ENCODE measurements at regions of chr10 and their contacts with region 1.

Region 1: GRCh38 chr10:95246579-95247051 is 44.2 kb downstream of the PDLIM1 start:
- DNase-seq: peak; percentile 89
- H3K4me3 ChIP-seq: no peak overlapping the region
- H3K27ac ChIP-seq: no peak overlapping the region
- H3K4me1 ChIP-seq: peaks cover 51% of the 10 kb centered on the region
- CTCF ChIP-seq: peak; percentile 96

Region 2: GRCh38 chr10:95133016-95133752 is 113.4 kb before region 1 on chr10:
- CTCF ChIA-PET with region 1: interaction called, 6 read pairs
- POLR2A ChIA-PET with region 1: interaction called, 3 read pairs
- intact Hi-C with region 1: loop called (anchors 1 kb)
- DNase-seq: peak; percentile 83
- H3K4me3 ChIP-seq: no peak overlapping the region
- H3K27ac ChIP-seq: no peak overlapping the region
- H3K4me1 ChIP-seq: no peaks in the 10 kb centered on the region
- CTCF ChIP-seq: peak; percentile 93

Region 3: DNA sequence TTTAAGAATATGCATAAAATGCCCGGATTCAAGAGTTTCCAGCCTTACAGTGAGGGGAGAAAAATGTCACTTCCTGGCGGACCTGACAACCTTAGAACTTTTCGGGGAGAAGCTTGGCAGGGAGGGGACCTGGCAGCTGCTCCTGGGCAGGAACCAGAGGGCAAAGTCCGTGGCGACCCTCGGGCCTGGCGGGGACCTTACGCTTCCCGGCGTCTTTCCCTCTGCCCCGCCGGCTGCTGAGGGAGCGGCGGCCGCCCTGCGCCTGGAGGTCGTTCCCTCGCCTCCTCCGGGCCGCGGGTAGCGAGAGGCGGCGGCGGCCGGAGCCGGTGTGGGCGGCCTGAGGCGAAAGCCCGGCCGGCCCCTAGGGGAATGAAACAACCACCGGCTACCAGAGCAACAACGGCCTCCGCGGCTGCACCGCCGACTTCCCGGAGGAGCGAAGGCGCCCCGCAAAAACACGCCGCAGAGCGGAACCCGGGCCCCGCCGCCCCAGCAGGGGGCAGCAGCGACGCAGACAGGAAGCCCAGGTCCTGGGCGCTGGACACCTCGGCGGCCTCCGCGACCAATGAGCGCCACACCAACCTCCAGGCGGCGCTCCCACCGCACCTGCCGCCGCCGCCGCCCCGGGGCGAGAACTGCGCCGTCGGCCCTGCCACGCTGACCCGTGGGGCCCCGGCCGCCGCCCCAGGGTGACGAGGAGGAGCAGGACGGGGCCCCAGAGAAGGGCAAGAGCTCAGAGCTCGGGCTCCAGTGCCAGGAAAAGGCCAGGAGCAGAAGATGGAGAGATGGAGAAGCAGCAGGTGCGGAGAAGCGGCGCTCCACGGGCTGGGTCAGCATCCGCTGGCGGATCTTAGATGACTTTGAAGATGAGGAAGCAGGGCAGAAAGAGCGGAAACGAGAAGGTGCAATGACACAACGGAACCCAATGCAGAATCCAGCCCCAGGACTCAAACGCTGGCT is 63.1 kb before region 1 on chr10:
- CTCF ChIA-PET with region 1: interaction called, 9 read pairs
- POLR2A ChIA-PET with region 1: interaction called, 4 read pairs
- intact Hi-C with region 1: loop called (anchors 1 kb)
- DNase-seq: peak; percentile 87
- H3K4me3 ChIP-seq: peak overlapping the region; percentile 70
- H3K27ac ChIP-seq: no peak overlapping the region
- H3K4me1 ChIP-seq: peaks cover 4% of the 10 kb centered on the region
- CTCF ChIP-seq: peak; percentile 90

Region 4: DNA sequence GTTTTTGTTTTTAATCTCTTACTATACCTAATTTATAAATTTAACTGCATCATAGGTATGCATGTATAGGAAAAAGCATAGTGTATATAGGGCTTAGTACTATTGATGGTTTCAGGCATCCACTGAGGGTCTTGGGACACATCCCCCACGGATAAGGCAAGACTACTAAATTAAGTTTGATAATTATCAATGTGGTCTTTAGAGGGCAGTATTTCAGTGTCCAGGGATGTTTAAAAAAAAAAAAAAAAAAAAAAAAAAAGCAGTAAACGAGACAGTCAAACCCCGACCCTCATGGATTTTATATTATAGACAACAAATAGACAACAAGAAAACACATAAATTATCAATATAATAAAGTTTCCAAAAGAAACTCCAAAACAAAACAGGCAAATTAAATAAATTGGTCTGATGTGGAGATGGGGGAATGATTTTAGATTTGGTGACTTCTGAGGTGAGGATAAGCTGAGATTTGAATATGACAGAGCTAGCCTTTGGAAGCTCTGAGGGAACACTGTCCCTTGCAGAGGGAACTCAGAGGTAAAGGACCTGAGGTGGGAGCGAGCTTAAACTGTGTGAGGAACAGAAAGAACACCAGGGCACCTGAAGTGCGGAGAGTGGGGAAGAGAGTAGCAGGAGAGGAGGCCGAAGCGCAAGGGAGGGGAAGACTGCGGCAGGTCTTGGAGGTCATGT is 37.8 kb before region 1 on chr10:
- CTCF ChIA-PET with region 1: interaction called, 5 read pairs
- POLR2A ChIA-PET with region 1: interaction called, 6 read pairs
- intact Hi-C with region 1: loop called (anchors 1 kb)
- DNase-seq: peak; percentile 42
- H3K4me3 ChIP-seq: no peak overlapping the region
- H3K27ac ChIP-seq: no peak overlapping the region
- H3K4me1 ChIP-seq: no peaks in the 10 kb centered on the region
- CTCF ChIP-seq: peak; percentile 72

Region 5: DNA sequence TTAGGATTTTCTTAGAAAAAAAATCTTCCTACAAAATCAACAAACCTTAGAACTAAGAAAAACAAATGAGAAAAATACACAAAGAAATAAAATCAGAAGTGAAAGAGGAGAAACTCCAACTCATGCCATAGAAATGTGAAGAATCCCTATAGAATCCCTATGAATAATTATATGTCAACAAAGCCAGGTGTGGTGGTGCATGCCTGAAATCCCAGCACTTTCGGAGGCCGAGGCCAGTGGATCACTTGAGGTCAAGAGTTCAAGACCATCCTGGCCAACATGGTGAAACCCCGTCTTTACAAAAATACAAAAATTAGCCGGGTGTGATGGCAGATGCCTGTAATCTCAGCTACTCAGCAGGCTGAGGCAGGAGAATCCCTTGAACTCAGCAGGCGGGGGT is 25.5 kb before region 1 on chr10:
- CTCF ChIA-PET with region 1: no interaction called
- POLR2A ChIA-PET with region 1: no interaction called
- intact Hi-C with region 1: no loop called
- DNase-seq: no peak
- H3K4me3 ChIP-seq: no peak overlapping the region
- H3K27ac ChIP-seq: no peak overlapping the region
- H3K4me1 ChIP-seq: no peaks in the 10 kb centered on the region
- CTCF ChIP-seq: no peak

Region 6: DNA sequence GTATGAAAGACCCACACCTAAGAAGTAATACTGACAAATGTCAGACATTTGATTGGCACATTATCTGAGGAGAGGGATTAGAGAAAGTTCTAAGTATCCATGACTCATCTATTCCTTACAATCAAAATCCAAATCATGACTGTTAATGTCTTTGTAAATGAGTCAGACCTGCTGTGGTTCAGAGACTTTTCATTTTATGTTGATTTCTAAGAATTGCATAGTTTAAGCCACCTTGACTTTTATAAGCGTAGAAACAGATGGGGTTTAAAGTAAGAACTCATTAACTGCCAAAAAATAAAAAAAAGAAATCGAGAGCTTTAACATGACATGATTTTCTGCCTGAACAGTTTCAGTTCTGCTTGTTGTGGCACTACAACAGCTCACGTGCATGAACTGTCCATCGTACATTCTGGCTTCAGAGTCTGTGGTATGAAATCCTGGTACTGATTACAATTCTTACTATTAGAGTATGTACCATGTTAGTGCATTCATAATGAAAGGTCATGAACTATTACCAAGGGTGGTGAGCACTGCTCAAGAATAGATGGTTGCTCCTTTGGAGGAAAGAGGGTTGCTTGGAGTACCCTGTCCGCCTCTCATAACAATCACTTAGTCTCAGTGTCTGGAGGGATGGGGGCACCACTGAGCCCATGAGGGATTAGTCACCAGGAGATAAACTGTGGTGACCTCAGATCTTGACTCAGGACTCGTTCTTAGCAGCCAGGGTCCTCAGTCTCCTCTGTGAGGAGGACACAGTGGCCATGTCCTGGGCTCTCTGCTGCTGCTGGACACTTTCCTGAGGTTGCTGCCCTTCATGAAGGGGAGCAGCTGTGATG is 10.3 kb before region 1 on chr10:
- CTCF ChIA-PET with region 1: interaction called, 4 read pairs
- POLR2A ChIA-PET with region 1: interaction called, 16 read pairs
- intact Hi-C with region 1: loop called (anchors 1 kb)
- DNase-seq: peak; percentile 79
- H3K4me3 ChIP-seq: peak overlapping the region; percentile 37
- H3K27ac ChIP-seq: peak overlapping the region; percentile 96
- H3K4me1 ChIP-seq: peaks cover 55% of the 10 kb centered on the region
- CTCF ChIP-seq: peak; percentile 33; the same call in 1 of the 2 replicates

Region 7: GRCh38 chr10:95290461-95291364 is 44.1 kb after region 1 on chr10 and contains the start of gene PDLIM1:
- CTCF ChIA-PET with region 1: interaction called, 6 read pairs
- POLR2A ChIA-PET with region 1: interaction called, 21 read pairs
- intact Hi-C with region 1: loop called (anchors 1 kb)
- DNase-seq: peak; percentile 71
- H3K4me3 ChIP-seq: peak within 1 kb of the TSS; percentile 71
- H3K27ac ChIP-seq: no peak within 1 kb of the TSS
- H3K4me1 ChIP-seq: peaks cover 63% of the 10 kb centered on the region
- CTCF ChIP-seq: 0 out of 2 replicates have a peak, but pooled peaks have one; percentile 28
- total RNA-seq, gene PDLIM1: 22.3 and 23.1 TPM in 2 replicates

Region 8: GRCh38 chr10:95363303-95363912 is 116.8 kb after region 1 on chr10:
- CTCF ChIA-PET with region 1: interaction called, 37 read pairs
- POLR2A ChIA-PET with region 1: interaction called, 85 read pairs
- intact Hi-C with region 1: loop called (anchors 1 kb)
- DNase-seq: peak; percentile 82
- H3K4me3 ChIP-seq: no peak overlapping the region
- H3K27ac ChIP-seq: no peak overlapping the region
- H3K4me1 ChIP-seq: peaks cover 8% of the 10 kb centered on the region
- CTCF ChIP-seq: peak; percentile 99

Measured in OCI-LY7 (cell line).